A549 (cell line): ENCODE measurements at regions of chr19 and their contacts with region 1.

Region 1: GRCh38 chr19:58543826-58544590 is at the start of gene TRIM28:
- DNase-seq: peak; percentile 100
- ATAC-seq: peak; percentile 93 to 97
- H3K4me3 ChIP-seq: peak within 1 kb of the TSS; percentile 97
- H3K27ac ChIP-seq: peak within 1 kb of the TSS; percentile 87 to 95
- H3K4me1 ChIP-seq: peaks cover 23% of the 10 kb centered on the region
- CTCF ChIP-seq: no peak
- EP300 ChIP-seq: no peak
- POLR2A ChIP-seq: peak; percentile 98
- RAD21 ChIP-seq: no peak; a peak in 1 of 5 replicates
- polyA plus RNA-seq, gene TRIM28: 576 and 735 TPM in 2 replicates

Region 2: DNA sequence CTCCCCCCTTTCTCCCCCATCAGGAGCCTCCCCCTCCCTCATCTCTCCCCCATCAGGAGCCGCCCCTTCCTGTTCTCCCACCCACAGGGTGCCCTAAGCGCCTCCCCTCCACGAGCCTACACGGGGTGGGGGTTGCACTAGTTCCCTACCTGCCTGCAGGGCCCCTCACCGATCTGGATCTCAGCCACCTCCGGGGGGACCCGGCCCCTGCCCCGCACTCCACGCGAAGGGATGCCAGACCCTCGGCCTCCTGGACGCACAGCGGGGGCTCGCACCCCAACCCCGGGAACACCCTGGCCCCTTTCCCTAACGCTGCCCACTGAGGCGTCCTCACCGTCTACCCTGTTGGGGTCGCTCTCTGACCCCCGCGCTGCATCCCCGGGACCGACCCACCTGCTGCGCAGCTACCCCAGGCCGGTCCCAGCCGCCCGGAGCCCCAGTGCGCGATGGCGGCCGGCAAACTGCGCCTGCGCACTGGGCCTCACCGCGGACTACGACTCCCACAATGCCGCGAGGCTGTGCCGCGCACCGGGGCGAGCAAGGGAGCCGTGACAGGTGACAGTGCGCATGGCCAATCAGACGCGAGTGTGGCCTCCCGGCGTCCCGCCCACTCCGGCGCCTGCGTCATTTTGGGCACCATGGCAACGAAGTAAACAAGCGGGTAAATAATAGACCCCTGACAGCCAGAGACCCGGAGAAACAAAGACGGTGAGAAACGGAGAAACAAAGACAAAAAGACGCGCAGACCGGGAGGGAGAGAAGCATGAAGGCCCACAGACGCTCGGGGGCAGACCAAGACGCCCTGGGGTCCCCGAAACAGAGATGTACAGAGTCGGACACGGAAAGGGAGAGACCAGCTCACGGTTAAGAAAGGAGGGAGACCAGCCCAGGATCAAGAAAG is 446.0 kb before region 1 on chr19 and contains the start of gene ZSCAN18:
- CTCF ChIA-PET with region 1: no interaction called
- POLR2A ChIA-PET with region 1: no interaction called
- DNase-seq: peak; percentile 61 to 82
- ATAC-seq: peak; percentile 72 to 92
- H3K4me3 ChIP-seq: peak within 1 kb of the TSS; percentile 40
- H3K27ac ChIP-seq: peak within 1 kb of the TSS in 1 of 2 experiments; percentile 58; a peak in 2 of 6 replicates
- H3K4me1 ChIP-seq: no peaks in the 10 kb centered on the region
- CTCF ChIP-seq: no peak
- EP300 ChIP-seq: no peak
- POLR2A ChIP-seq: no peak
- RAD21 ChIP-seq: no peak
- polyA plus RNA-seq, gene ZSCAN18: 2.2 and 2.9 TPM in 2 replicates

Region 3: DNA sequence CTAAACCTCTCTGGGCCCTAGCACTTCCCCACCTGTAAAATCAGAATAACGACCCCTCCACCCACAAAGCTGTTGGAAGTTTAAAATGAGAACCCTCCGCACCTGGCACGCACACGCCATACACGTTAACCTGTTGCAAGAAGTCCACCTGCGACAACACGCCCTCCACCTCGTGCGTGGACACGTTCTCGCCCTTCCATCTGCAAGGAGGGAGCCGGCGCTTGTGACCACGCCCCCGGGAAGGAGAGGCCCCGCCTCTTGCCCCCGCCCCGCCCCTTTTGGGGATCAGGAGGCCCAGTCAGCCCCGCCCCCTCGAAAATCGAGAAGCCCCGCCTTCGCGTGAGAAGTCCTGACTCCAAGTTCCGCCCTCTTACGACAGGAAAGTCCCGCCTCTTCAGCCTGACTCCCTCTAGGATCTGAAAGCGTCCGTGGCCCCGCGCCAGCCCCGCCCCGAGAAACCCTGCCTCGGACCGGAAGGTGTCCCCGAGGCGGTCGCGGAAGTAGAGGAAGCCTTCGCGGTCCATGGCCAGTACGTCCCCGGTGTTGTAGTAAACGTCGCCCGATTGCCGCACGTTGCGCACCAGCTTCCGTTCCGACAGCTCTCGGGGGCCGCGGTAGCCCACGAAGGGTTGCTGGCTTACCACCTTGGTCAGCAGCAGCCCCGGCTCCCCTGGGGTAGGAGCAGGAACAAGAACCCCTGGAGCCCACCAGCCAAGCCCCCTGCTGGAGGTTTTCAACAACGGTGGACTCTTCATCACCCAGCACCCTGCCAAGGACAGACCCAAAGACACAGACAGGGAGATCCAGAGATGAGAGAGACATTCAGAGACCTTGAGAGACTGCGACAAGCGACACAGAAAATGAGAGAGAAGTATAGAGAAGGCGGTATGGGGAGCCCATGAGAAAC is 44.7 kb before region 1 on chr19:
- CTCF ChIA-PET with region 1: no interaction called
- POLR2A ChIA-PET with region 1: interaction called, 10 read pairs
- DNase-seq: peak; percentile 100
- ATAC-seq: peak; percentile 97 to 99
- H3K4me3 ChIP-seq: peak overlapping the region; percentile 61
- H3K27ac ChIP-seq: peak overlapping the region; percentile 85 to 89
- H3K4me1 ChIP-seq: peaks cover 13% of the 10 kb centered on the region; the same call in 2 of the 3 replicates
- CTCF ChIP-seq: no peak; the same call in 2 of the 3 replicates
- EP300 ChIP-seq: no peak
- POLR2A ChIP-seq: peak; percentile 87
- RAD21 ChIP-seq: peak; percentile 19; a peak in 2 of 5 replicates

Region 4: DNA sequence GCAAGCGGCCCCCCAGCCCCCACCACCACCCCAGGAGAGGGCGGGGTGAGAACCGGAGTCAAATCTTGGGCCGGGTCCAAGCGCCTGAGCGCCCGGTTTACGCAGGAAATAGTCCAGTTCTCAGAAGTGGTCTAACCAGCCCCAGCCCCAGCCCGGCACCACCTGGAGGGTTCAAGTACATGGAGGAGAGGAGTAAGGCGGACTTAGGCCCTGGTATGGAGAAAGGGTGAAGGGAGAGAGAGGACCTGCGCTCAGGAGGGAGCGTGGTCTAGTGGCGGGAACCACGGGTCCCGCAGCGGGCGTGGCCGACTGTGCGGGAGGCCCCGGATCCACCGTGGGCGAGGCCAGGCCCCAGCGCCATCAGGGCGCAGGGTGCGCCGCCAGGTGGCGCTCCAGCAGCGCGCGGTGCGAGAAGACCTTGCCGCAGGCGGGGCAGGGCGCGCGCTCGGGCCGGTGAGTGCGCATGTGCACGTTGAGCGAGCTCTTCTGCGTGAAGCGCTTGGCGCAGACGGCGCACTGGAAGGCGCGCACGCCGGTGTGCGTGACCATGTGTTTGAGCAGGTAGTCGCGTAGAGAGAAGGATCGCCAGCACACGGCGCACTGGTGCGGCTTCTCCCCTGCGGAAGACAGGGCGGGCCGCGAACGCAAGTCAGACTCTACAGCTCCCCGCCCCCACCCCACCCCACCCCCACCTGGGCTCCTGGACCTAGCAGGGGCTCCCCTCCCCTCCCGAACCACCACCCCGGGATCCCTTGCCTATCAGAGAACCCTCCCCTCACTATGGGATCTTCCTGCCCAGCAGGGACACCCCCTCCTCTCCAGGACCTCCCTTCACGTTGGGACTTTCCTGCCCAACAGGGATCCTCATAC is 30.1 kb before region 1 on chr19:
- CTCF ChIA-PET with region 1: interaction called, 222 read pairs
- POLR2A ChIA-PET with region 1: interaction called, 184 read pairs
- DNase-seq: peak; percentile 67 to 92
- ATAC-seq: peak; percentile 57 to 81
- H3K4me3 ChIP-seq: peak overlapping the region; percentile 44
- H3K27ac ChIP-seq: peak overlapping the region; percentile 71 to 86
- H3K4me1 ChIP-seq: peaks cover 15% of the 10 kb centered on the region
- CTCF ChIP-seq: peak; percentile 81
- EP300 ChIP-seq: no peak
- POLR2A ChIP-seq: peak; percentile 89
- RAD21 ChIP-seq: peak; percentile 44 to 57; a peak in 4 of 5 replicates

Region 5: GRCh38 chr19:58531034-58531840 is 12.8 kb before region 1 on chr19:
- CTCF ChIA-PET with region 1: no interaction called
- POLR2A ChIA-PET with region 1: interaction called, 11 read pairs
- DNase-seq: no peak
- ATAC-seq: peak; percentile 18 to 20; a peak in 2 of 6 replicates
- H3K4me3 ChIP-seq: no peak overlapping the region
- H3K27ac ChIP-seq: no peak overlapping the region
- H3K4me1 ChIP-seq: no peaks in the 10 kb centered on the region
- CTCF ChIP-seq: no peak
- EP300 ChIP-seq: no peak
- POLR2A ChIP-seq: no peak
- RAD21 ChIP-seq: no peak

Region 6: GRCh38 chr19:58558623-58559274 is 14.7 kb after region 1 on chr19:
- CTCF ChIA-PET with region 1: interaction called, 6 read pairs
- POLR2A ChIA-PET with region 1: interaction called, 103 read pairs
- DNase-seq: peak; percentile 93 to 100
- ATAC-seq: peak; percentile 45 to 76
- H3K4me3 ChIP-seq: peak overlapping the region; percentile 78
- H3K27ac ChIP-seq: peak overlapping the region; percentile 95 to 99
- H3K4me1 ChIP-seq: peaks cover 37% of the 10 kb centered on the region
- CTCF ChIP-seq: no peak
- EP300 ChIP-seq: no peak
- POLR2A ChIP-seq: peak; percentile 68
- RAD21 ChIP-seq: no peak

Region 7: GRCh38 chr19:58572818-58573657 is 29.0 kb after region 1 on chr19 and contains the start of gene MZF1:
- CTCF ChIA-PET with region 1: no interaction called
- POLR2A ChIA-PET with region 1: interaction called, 28 read pairs
- DNase-seq: peak; percentile 100
- ATAC-seq: peak; percentile 64 to 81
- H3K4me3 ChIP-seq: peak within 1 kb of the TSS; percentile 67
- H3K27ac ChIP-seq: peak within 1 kb of the TSS; percentile 91
- H3K4me1 ChIP-seq: peaks cover 15% of the 10 kb centered on the region
- CTCF ChIP-seq: no peak
- EP300 ChIP-seq: no peak
- POLR2A ChIP-seq: peak; percentile 57
- RAD21 ChIP-seq: no peak
- polyA plus RNA-seq, gene MZF1: 19.5 and 20.3 TPM in 2 replicates